ENCODE measurements at regions of chr11 and their contacts with region 1.

Region 1: GRCh38 chr11:62694455-62695167 is 5.3 kb upstream of the LRRN4CL start:
- DNase-seq: no peak
- H3K4me3 ChIP-seq: no peak overlapping the region
- H3K27me3 ChIP-seq: no peaks in the 10 kb centered on the region
- CTCF ChIP-seq: peak; percentile 88

Region 2: DNA sequence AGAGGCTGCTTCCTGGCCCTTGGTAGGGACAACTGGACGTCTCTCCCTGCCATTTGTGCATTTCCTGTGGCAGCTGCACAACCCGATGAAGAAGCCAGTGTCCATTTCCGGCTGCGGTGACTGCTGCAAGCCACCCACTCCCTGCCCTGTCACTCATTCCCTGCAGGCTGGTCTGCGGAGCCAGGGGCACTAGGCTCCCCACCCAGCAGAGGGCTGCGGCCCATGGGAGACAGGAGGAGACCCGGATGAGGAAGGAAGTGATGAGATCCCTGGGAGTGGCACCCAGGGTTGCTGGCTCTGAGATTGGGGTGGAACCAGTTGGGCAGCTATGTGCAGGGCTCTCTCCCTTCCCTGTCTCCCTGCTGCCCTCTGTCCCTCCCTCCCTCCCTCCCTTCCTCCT is 952.2 kb before region 1 on chr11:
- CTCF ChIA-PET with region 1: no interaction called
- POLR2A ChIA-PET with region 1: no interaction called
- DNase-seq: no peak
- H3K4me3 ChIP-seq: no peak overlapping the region
- H3K27me3 ChIP-seq: no peaks in the 10 kb centered on the region
- CTCF ChIP-seq: no peak

Region 3: GRCh38 chr11:62671575-62672389 is 22.8 kb before region 1 on chr11 and contains the starts of genes LBHD1 and UQCC3:
- CTCF ChIA-PET with region 1: interaction called, 15 read pairs
- POLR2A ChIA-PET with region 1: interaction called, 3 read pairs
- DNase-seq: no peak
- H3K4me3 ChIP-seq: peak within 1 kb of the TSS; percentile 78
- H3K27me3 ChIP-seq: no peaks in the 10 kb centered on the region
- CTCF ChIP-seq: no peak
- polyA plus RNA-seq, gene LBHD1: 4.0 and 4.1 TPM in 2 replicates
- polyA plus RNA-seq, gene UQCC3: 6.9 TPM in 2 replicates

Region 4: GRCh38 chr11:62678770-62679696 is 15.6 kb before region 1 on chr11 and contains the start of gene UBXN1:
- CTCF ChIA-PET with region 1: interaction called, 40 read pairs
- POLR2A ChIA-PET with region 1: no interaction called
- DNase-seq: no peak
- H3K4me3 ChIP-seq: peak within 1 kb of the TSS; percentile 74
- H3K27me3 ChIP-seq: no peaks in the 10 kb centered on the region
- CTCF ChIP-seq: no peak
- polyA plus RNA-seq, gene UBXN1: 83.7 and 86.0 TPM in 2 replicates

Region 5: DNA sequence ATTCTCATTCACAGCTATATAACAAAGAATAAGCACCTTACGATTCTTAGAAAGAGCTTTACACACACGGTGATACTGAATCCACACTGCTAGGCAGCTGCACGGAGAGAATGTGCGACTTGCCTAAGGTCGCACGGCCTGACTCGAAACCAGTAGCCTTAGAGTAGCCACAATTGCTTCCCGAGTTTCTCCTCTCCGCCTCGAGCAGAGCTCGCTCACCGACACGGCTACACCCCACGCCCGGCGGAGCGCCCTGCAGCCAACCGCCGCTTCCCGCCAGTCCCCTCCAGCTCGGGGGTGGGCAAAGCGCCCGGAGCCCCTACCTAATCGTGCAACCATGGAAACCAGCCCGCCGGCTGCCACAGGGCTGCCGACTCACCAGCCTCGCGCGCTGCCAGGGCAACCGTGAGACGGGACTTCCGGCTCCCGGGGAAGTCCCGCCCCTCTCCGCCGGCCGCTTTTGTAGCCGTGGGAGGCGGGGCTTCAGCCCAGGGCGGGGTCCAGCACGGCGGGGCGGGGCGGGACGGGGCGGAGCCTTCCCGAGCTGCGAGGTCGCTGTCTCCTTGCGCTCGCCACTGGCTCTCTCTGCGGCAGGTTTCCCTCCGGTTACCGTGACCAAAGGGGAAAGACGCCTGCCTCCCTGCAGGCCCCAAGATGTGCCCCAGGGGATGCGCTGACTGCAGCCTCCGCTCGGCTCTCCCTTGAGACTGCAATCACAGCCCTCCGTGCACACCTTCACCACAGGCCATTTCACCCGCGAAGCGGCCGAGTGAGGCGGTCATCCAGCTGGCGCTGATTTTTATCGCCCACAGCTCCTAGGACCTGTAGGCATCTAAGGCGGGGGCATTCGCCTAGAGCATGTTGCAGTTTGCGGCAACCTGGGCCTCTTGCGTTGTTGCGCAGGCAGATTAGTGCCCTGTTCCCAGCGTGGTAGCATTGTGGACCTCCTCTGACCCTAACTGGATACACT is 11.6 kb after region 1 on chr11:
- CTCF ChIA-PET with region 1: interaction called, 15 read pairs
- POLR2A ChIA-PET with region 1: no interaction called
- DNase-seq: peak; percentile 57
- H3K4me3 ChIP-seq: peak overlapping the region; percentile 58
- H3K27me3 ChIP-seq: no peaks in the 10 kb centered on the region
- CTCF ChIP-seq: no peak

Measured in BJ (cell line).